ENCODE measurements at regions of chr13 and their contacts with region 1.

Region 1: DNA sequence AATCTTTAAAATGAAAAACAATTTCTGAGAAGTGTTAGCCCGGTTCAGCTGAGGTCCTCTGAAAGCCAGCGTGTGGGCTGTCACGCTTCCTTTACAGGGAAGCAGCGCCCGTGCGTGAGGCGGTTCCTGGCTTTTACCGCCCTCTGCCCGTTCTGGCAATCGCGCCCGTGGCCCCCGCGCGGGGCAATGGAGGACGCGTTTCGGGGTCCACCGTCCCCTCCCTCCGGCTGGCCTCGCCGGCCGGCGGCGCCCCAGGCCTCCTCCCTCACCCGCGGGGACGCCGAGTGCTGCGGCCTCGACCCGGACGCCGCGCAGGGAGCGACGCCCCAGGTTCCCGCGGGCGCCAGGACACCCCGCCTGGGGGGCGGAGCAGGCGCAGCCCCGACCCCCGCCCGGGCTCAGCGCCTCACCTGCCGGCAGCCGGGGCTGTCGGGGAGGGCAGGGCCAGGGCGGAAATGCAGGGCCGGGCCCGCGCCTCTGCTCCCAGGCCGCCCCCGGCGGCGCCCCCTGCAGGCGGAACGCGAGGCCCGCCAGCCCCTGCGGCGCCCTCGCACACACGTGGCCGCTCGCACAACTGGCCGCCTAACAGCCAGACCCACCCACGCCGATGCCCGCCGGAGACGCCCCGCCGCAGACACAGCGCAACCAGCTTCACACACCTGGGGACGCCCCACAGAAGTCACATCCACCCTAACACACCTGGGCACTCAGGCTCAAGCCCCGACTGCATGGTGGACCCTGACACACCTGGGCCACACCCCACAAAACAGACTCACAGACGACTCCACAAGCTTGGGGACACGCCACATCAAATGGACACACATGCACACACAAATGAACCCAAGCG is at the start of gene GGACT:
- DNase-seq: peak; percentile 95
- ATAC-seq: peak; percentile 90
- H3K4me3 Mint-ChIP-seq: peak within 1 kb of the TSS; percentile 83
- H3K27ac Mint-ChIP-seq: peak within 1 kb of the TSS; percentile 95
- H3K4me1 Mint-ChIP-seq: peaks cover 48% of the 10 kb centered on the region
- H3K27me3 Mint-ChIP-seq: no peaks in the 10 kb centered on the region
- total RNA-seq, gene GGACT: 3.1 to 4.1 TPM

Region 2: GRCh38 chr13:100573121-100573520 is 15.4 kb before region 1 on chr13:
- POLR2A ChIA-PET with region 1: interaction called, 30 read pairs
- DNase-seq: peak; percentile 61
- ATAC-seq: peak; percentile 86
- H3K4me3 Mint-ChIP-seq: no peak overlapping the region
- H3K27ac Mint-ChIP-seq: no peak overlapping the region
- H3K4me1 Mint-ChIP-seq: peaks cover 26% of the 10 kb centered on the region
- H3K27me3 Mint-ChIP-seq: no peaks in the 10 kb centered on the region

Region 3: GRCh38 chr13:100619940-100620339 is 31.4 kb after region 1 on chr13:
- POLR2A ChIA-PET with region 1: no interaction called
- DNase-seq: no peak
- ATAC-seq: peak; percentile 79
- H3K4me3 Mint-ChIP-seq: no peak overlapping the region
- H3K27ac Mint-ChIP-seq: peak overlapping the region; percentile 72
- H3K4me1 Mint-ChIP-seq: peaks cover 10% of the 10 kb centered on the region
- H3K27me3 Mint-ChIP-seq: no peaks in the 10 kb centered on the region